ENCODE measurements at regions of chr2 and their contacts with region 1.

Region 1: DNA sequence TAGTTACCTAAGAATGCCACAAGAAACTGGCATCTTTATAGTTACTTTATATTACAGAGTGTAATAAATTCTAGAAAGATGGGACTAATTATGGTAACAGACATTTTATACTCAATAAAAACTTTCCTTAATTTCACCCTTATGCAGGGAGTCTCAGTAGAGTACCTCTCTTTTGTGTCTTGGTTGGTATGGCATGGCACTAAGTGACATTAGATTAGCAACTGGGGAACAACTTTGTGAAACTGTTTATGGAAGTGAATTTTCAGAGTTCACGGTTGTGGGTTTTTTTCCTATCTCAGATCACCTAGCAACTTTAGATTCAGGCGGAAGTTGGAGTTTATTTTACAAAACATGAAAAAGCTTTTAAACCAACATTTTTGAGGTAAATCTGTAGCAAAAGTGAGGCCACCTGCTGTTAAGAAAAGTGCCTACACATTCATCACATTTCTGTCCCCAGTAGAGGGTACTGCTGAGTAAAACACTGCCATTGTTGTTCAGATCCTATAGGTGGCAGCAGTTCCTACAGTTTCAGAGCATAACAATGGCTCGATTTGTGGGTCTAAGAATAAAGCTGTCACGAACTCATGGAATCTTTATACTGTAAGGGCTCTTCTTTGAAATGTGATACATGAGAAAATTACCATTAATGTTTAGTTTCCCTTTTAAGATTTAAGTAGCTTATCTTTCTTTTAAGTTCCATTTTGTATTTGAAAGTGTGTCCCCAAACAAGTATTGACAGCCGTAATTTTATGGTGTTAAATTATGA is 117.6 kb downstream of the CAMKMT start:
- DNase-seq: peak; percentile 79
- CTCF ChIP-seq: peak; percentile 99

Region 2: DNA sequence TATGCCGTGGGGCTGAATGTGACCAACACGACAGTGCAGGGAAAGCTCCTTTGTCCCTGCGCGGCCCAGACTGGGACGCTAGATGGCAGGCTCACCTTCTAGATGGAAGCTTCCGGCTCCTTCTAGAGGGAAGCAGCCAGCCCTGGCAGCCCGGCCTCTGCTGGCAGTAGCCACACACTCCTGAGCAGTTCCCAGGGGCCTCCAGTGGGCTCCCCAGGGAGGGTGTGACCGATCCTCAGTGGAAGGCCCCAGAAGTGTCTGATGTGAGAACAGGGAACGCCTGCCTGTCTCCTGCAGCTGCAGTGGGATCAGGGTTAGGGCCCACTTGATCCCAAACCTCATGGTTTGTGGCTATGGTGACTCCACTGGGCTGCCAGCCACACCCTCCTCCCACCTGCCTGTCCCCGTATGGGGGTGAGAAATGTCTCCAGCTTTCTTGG is 435.0 kb before region 1 on chr2:
- CTCF ChIA-PET with region 1: interaction called, 16 read pairs
- POLR2A ChIA-PET with region 1: no interaction called
- DNase-seq: peak; percentile 87
- CTCF ChIP-seq: peak; percentile 97

Region 3: GRCh38 chr2:44342854-44343253 is 136.5 kb before region 1 on chr2:
- CTCF ChIA-PET with region 1: no interaction called
- POLR2A ChIA-PET with region 1: no interaction called
- DNase-seq: no peak
- CTCF ChIP-seq: peak; percentile 27

Region 4: DNA sequence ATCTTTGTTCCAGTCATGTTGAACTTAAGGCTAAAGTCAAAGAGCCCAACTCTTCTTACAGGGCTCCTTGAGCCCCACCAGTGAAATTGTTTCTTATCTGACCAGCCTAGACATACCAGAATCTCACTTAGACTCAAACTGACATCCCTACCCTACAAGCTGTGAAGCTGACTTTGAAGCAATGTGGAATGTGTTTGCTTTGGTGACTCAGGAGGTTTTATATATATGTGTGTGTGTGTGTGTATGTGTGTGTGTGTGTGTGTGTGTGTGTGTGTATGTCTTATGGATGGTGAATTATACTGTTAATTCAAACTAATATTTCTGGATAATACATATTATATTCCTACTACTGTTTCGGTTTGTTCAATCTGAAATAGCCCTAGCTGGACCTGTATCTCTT is 50.3 kb before region 1 on chr2:
- CTCF ChIA-PET with region 1: interaction called, 11 read pairs
- POLR2A ChIA-PET with region 1: no interaction called
- DNase-seq: no peak
- CTCF ChIP-seq: no peak

Region 5: GRCh38 chr2:44490726-44491125 is 11.4 kb after region 1 on chr2:
- CTCF ChIA-PET with region 1: interaction called, 14 read pairs
- POLR2A ChIA-PET with region 1: no interaction called
- DNase-seq: no peak
- CTCF ChIP-seq: no peak

Region 6: DNA sequence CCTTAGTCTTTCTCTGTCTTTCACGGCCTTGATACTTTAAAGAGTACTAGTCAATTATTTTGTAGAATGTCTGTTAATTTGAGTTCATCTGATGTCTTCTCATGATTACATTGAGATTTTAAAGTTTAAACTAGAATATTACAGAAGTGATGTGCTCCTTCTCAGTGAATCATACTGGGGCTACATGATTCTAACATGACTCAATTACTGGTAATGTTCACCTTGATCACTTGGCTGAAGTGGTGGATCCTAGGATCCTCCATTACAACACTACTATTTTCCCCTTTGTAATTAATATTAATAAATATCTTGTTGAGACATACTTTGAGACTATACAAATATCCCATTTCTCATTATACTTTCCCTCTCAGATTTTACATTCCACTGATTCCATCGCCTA is 30.9 kb after region 1 on chr2:
- CTCF ChIA-PET with region 1: interaction called, 10 read pairs
- POLR2A ChIA-PET with region 1: no interaction called
- DNase-seq: no peak
- CTCF ChIP-seq: no peak

Region 7: GRCh38 chr2:44974064-44974715 is 494.9 kb after region 1 on chr2:
- CTCF ChIA-PET with region 1: interaction called, 14 read pairs
- POLR2A ChIA-PET with region 1: no interaction called
- DNase-seq: no peak
- CTCF ChIP-seq: peak; percentile 27

Measured in GM10248 (cell line).